Natural killer cell (primary cell): ENCODE measurements at regions of chr22 and their contacts with region 1.

Region 1: DNA sequence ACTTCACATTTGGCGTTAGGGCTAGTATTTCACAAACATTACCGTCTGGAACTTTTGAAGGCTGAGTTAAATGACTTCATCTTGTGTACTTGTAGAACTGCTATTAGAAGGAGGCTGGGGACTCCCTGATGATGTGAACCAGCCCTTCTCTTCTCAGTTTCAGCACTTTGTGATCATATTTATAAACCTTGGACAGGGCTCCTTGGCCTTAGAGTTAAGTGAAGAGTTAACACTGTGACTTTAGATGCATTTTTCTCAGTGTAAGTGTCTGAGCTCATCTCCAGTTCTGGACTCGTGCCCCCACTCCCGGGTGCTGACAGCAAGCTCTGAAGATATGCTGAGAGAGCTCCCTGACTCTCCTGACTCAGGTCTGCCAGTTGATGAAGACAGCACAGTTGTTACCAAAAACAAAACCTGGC is 8.4 kb downstream of the MIAT start:
- DNase-seq: no peak
- ATAC-seq: peak in 2 of 3 donors; percentile 16 to 35
- H3K4me3 ChIP-seq: no peak overlapping the region
- H3K4me3 Mint-ChIP-seq: peak overlapping the region; percentile 57
- H3K27ac ChIP-seq: no peak overlapping the region
- H3K27ac Mint-ChIP-seq: peak overlapping the region; percentile 82 to 88
- H3K4me1 ChIP-seq: peaks cover 46% of the 10 kb centered on the region
- H3K4me1 Mint-ChIP-seq: peaks cover 48 to 51% of the 10 kb centered on the region in 2 donors
- H3K27me3 ChIP-seq: no peaks in the 10 kb centered on the region
- H3K27me3 Mint-ChIP-seq: no peaks in the 10 kb centered on the region
- CTCF ChIP-seq: no peak

Region 2: DNA sequence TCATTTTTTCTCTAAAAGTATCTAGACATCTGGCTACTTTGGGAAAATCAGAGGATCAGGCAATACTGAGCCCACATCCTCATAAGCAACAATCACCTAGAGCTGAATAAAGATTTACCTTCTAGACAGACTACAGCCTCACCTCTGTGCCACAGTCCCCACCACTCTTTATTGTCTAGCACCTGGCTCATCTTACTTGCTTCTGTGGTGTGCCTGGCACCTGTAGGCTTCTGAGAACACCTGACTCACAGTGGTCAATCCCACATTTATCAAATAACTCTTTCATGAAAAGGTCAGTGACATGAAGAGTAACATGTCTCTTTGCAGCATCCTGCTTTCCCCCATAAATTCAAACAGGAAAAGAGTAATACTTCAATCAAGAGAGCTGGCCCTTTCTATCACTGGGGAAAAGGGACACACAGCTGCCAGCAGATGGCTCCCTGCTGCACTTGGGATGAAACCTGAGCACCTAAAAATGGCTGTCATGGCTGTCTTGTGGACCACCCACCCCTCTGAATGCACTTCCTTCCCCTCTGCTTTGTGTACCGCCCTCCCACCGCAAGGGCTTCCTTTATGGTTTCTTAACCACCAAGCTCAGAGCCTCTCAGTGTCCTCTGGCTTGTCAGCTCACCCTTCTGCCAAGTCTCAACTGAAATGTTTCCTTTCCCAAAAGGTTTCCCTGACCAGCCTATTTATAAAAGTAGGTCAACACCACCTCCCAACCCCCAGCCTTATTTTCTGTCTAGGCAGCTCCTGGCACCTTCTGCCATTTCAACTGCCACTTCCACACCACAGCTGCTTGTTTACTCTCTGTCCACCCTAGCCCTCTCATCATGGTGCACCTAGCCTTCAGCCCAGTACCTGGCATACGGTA is 162.9 kb before region 1 on chr22:
- intact Hi-C with region 1: loop called (anchors 1 kb)
- DNase-seq: peak; percentile 57 to 84
- ATAC-seq: peak; percentile 88 to 91 (median 89)
- H3K4me3 ChIP-seq: no peak overlapping the region
- H3K4me3 Mint-ChIP-seq: peak overlapping the region; percentile 79
- H3K27ac ChIP-seq: peak overlapping the region; percentile 63
- H3K27ac Mint-ChIP-seq: peak overlapping the region; percentile 87 to 93
- H3K4me1 ChIP-seq: peaks cover 19% of the 10 kb centered on the region
- H3K4me1 Mint-ChIP-seq: peaks cover 26% of the 10 kb centered on the region in 2 donors
- H3K27me3 ChIP-seq: no peaks in the 10 kb centered on the region
- H3K27me3 Mint-ChIP-seq: no peaks in the 10 kb centered on the region
- CTCF ChIP-seq: peak; percentile 63

Region 3: DNA sequence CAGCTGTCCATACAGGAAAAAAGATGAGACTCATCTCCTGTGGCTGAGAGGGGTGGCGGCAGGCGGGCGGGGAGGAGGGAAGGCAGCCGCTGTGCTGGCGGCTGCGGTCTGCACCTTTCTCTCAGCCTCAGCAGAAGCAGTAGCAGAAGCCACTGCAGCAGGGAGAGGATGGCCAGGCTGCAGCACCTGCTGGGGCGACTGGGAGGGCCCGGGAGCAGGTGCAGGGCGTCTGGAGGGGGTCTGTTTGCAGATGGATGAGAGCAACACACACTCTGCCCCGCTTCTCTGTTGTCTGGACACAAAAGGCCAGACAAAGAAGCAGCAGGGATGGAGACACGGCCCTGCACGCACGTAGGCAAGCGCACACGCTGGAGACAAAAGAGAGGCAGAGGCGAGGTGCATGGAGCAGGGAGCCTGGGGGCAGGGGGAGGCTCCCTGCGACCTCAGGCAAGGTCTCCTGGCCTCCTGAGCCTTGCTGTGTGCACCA is 17.8 kb before region 1 on chr22:
- intact Hi-C with region 1: loop called (anchors 2 kb)
- DNase-seq: peak in 1 of 2 donors; percentile 69
- ATAC-seq: peak in 2 of 3 donors; percentile 38 to 58
- H3K4me3 ChIP-seq: no peak overlapping the region
- H3K4me3 Mint-ChIP-seq: peak overlapping the region; percentile 65
- H3K27ac ChIP-seq: no peak overlapping the region
- H3K27ac Mint-ChIP-seq: peak overlapping the region; percentile 76 to 81
- H3K4me1 ChIP-seq: peaks cover 53% of the 10 kb centered on the region
- H3K4me1 Mint-ChIP-seq: peaks cover 64% of the 10 kb centered on the region in 2 donors
- H3K27me3 ChIP-seq: no peaks in the 10 kb centered on the region
- H3K27me3 Mint-ChIP-seq: no peaks in the 10 kb centered on the region
- CTCF ChIP-seq: no peak